ENCODE measurements at regions of chrX and their contacts with region 1.

Region 1: GRCh38 chrX:74536152-74536831 is 78.1 kb downstream of the RLIM start:
- DNase-seq: peak; percentile 91
- ATAC-seq: peak; percentile 90

Region 2: GRCh38 chrX:74291964-74292807 is 244.1 kb before region 1 on chrX:
- intact Hi-C with region 1: loop called (anchors 5 kb)
- DNase-seq: peak; percentile 95
- ATAC-seq: peak; percentile 97

Region 3: DNA sequence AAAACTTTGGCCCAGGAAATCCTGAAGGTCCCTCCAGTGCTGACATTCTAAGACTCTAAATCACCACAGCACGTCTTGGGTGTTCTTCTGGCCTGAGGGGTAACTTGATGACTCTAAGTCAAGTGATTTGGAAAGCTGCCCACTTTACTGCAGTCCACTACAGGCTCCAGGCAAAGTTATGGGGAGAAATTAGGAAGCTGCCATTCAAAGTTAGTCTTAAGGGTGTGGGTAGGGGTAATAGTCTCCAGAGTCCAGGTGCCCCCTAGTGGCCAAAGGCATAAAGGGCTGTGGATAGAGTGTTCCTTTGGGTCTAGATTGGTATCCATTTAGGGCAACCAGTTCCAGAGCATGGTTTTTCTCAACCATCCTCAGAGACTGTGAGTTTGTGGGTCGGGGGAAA is 153.7 kb before region 1 on chrX:
- intact Hi-C with region 1: loop called (anchors 5 kb)
- DNase-seq: peak; percentile 63
- ATAC-seq: peak; percentile 80

Region 4: DNA sequence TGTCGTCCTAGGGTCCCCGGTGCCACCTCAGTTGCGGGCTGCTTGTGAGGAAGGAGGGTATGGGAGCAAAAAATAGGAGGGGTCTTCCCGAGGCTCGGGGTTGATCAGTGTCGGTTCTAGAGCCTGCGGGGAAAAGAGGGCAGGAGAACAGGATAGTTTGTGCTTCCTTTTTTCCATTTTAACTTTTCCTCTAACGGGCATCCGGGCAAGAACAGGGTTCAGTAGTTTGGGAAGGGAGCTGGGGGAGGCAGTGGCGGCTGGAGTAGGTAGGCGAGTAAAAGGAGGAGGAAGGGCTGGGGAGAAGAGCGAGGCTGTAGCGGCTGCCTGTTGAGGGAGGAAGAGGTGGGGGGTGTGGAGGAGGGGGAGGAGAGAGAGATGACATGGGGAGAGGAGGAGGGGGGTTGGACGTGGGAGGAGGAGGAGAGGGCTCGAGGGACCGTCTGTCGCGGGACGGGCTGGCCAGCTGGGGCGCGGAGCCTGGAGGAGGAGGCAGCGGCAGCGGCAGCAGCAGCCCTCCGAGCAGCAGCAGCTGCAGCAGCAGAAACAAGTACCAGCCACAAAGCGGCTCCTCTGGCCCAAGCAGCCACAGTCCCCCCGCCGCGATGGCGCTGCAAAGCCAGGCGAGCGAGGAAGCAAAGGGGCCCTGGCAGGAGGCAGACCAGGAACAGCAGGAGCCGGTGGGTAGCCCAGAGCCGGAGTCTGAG is 115.1 kb before region 1 on chrX and contains the start of gene SLC16A2:
- intact Hi-C with region 1: loop called (anchors 2 kb)
- DNase-seq: peak; percentile 80
- ATAC-seq: peak; percentile 77
- total RNA-seq, gene SLC16A2: 8.2 TPM

Region 5: GRCh38 chrX:74614093-74614909 is 78.0 kb after region 1 on chrX and contains the start of gene RLIM:
- intact Hi-C with region 1: loop called (anchors 10 kb)
- DNase-seq: peak; percentile 95
- ATAC-seq: peak; percentile 100
- total RNA-seq, gene RLIM: 20.1 TPM

Measured in Right ventricle myocardium inferior (tissue), 1 donor.